Breast epithelium (tissue), 4 donors: ENCODE measurements at regions of chr14 and their contacts with region 1.

Region 1: GRCh38 chr14:76067536-76067935 is 82.0 kb downstream of the IFT43 start:
- DNase-seq: no peak
- H3K4me3 ChIP-seq: no peak overlapping the region
- H3K27ac ChIP-seq: no peak overlapping the region
- H3K4me1 ChIP-seq: no peaks in the 10 kb centered on the region
- H3K27me3 ChIP-seq: no peaks in the 10 kb centered on the region
- CTCF ChIP-seq: no peak
- POLR2A ChIP-seq: no peak

Region 2: DNA sequence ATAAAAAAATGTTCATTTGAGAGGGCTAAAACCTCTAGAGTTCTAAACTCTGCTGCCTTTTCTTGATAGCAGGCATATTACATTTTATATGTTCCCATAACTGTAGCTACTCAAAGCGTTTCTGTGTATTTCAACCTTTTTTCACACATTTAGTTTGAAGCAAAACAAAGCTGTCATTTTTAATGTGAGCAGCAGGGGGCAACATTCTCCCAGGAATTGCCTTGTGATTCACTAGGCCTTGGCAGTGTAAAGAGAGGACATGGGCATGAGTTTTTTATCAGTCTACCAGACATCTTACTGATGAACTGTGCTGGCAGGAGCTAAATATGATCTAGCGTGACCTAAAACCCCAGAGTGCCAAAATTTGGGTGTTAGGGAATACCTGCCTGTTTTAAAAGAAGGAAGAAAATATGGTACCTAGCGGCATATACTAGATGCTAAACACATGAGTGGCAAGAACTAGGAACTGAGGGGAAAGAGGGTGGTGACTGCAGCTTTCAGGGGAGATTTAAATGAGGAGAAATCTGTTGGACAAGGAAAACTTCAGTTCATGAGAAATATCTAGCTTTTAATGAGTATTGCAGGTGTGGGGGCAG is 16.6 kb before region 1 on chr14:
- intact Hi-C with region 1: loop called (anchors 1 kb)
- DNase-seq: no peak
- H3K4me3 ChIP-seq: no peak overlapping the region
- H3K27ac ChIP-seq: no peak overlapping the region
- H3K4me1 ChIP-seq: no peaks in the 10 kb centered on the region
- H3K27me3 ChIP-seq: no peaks in the 10 kb centered on the region
- CTCF ChIP-seq: peak; percentile 51 to 85 (median 76)
- POLR2A ChIP-seq: no peak

Region 3: GRCh38 chr14:77290741-77291140 is 1223.2 kb after region 1 on chr14:
- intact Hi-C with region 1: no loop called
- DNase-seq: no peak
- H3K4me3 ChIP-seq: no peak overlapping the region
- H3K27ac ChIP-seq: no peak overlapping the region
- H3K4me1 ChIP-seq: no peaks in the 10 kb centered on the region
- H3K27me3 ChIP-seq: no peaks in the 10 kb centered on the region
- CTCF ChIP-seq: no peak
- POLR2A ChIP-seq: no peak